ENCODE measurements at regions of chr21 and their contacts with region 1.

Region 1: DNA sequence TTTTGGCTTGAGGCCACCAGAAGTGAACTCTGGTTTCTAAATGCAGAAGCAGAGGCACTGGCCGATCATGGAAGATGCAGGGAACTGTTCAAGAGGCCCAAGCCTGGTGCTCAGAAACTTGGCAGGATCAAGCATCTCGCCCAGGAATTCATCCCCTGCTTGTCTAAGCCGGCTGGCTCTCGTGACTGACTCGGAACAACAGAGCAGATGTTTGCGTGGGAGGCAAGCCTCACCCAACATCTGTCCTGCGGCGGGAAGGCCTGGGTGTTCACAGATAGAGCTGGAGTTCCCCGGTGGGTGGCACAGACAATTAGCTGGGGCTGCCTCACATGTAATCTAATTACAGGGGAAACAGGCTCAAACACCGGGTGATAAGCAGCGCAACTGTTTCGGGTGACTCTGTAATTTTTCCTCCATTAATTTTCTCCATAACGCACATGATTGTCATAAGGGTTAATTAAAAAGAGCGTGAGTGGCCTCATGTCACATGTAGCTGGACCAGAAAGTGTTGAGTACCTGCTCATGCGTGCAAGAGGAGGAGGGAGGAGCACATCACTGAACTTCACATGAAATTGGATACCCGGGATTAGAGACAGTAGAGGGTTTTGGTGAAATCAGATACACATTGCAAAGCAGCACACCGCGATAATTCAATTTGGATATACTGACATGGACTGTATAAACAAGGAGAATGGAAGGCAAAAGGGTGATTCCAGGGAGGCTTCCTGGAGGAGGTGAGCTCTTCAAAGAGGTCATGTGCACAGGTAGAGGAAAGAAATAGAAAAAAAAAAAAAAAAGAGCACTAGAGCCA is 180.0 kb downstream of the ETS2 start:
- DNase-seq: peak; percentile 91
- H3K4me3 ChIP-seq: no peak overlapping the region
- H3K27ac ChIP-seq: peak overlapping the region; percentile 60 to 79 (median 73)
- H3K4me1 ChIP-seq: peaks cover 0 to 68% (median 62%) of the 10 kb centered on the region in 4 donors
- H3K27me3 ChIP-seq: no peaks in the 10 kb centered on the region
- CTCF ChIP-seq: no peak
- EP300 ChIP-seq: peak in 1 of 4 donors; percentile 74
- POLR2A ChIP-seq: no peak

Region 2: GRCh38 chr21:38733973-38734546 is 251.7 kb before region 1 on chr21:
- intact Hi-C with region 1: loop called (anchors 5 kb)
- DNase-seq: peak; percentile 92
- H3K4me3 ChIP-seq: peak overlapping the region in 3 of 4 donors; percentile 11 to 40 (median 38)
- H3K27ac ChIP-seq: peak overlapping the region; percentile 55 to 76 (median 75)
- H3K4me1 ChIP-seq: peaks cover 0 to 9% (median 6%) of the 10 kb centered on the region in 4 donors
- H3K27me3 ChIP-seq: no peaks in the 10 kb centered on the region
- CTCF ChIP-seq: peak; percentile 84 to 93 (median 90)
- EP300 ChIP-seq: no peak
- POLR2A ChIP-seq: no peak

Region 3: GRCh38 chr21:38805328-38806152 is 180.2 kb before region 1 on chr21 and contains the start of gene ETS2:
- intact Hi-C with region 1: loop called (anchors 5 kb)
- DNase-seq: peak; percentile 97
- H3K4me3 ChIP-seq: peak within 1 kb of the TSS; percentile 71 to 98 (median 96)
- H3K27ac ChIP-seq: peak within 1 kb of the TSS; percentile 92 to 98 (median 94)
- H3K4me1 ChIP-seq: peaks cover 0 to 39% (median 21%) of the 10 kb centered on the region in 4 donors
- H3K27me3 ChIP-seq: no peaks in the 10 kb centered on the region
- CTCF ChIP-seq: peak in 1 of 4 experiments; percentile 2
- EP300 ChIP-seq: no peak
- POLR2A ChIP-seq: peak; percentile 53 to 58
- total RNA-seq, gene ETS2: 32.1 to 112 (median 41.7) TPM

Region 4: GRCh38 chr21:38897532-38898422 is 88.0 kb before region 1 on chr21:
- intact Hi-C with region 1: loop called (anchors 2 kb)
- DNase-seq: peak; percentile 69
- H3K4me3 ChIP-seq: no peak overlapping the region
- H3K27ac ChIP-seq: peak overlapping the region in 3 of 4 donors; percentile 48 to 60 (median 48)
- H3K4me1 ChIP-seq: peaks cover 0 to 12% (median 4%) of the 10 kb centered on the region in 4 donors
- H3K27me3 ChIP-seq: no peaks in the 10 kb centered on the region
- CTCF ChIP-seq: no peak
- EP300 ChIP-seq: peak; percentile 64 to 87 (median 82)
- POLR2A ChIP-seq: no peak

Region 5: GRCh38 chr21:38925923-38926322 is 59.9 kb before region 1 on chr21:
- intact Hi-C with region 1: loop called (anchors 2 kb)
- DNase-seq: peak; percentile 91
- H3K4me3 ChIP-seq: peak overlapping the region in 3 of 4 donors; percentile 27 to 37 (median 36)
- H3K27ac ChIP-seq: peak overlapping the region; percentile 73 to 86 (median 81)
- H3K4me1 ChIP-seq: peaks cover 0 to 28% (median 27%) of the 10 kb centered on the region in 4 donors
- H3K27me3 ChIP-seq: no peaks in the 10 kb centered on the region
- CTCF ChIP-seq: no peak
- EP300 ChIP-seq: peak in 2 of 4 donors; percentile 67 to 76
- POLR2A ChIP-seq: no peak

Measured in sigmoid colon (tissue), 7 donors.